Activated B cell treated with CpG ODN at 0.5 μM for 24 hours (primary cell): ENCODE measurements at regions of chr9 and their contacts with region 1.

Region 1: GRCh38 chr9:27460226-27461023 is 63.7 kb upstream of the IFNK start:
- DNase-seq: no peak
- ATAC-seq: peak; percentile 93
- H3K4me3 Mint-ChIP-seq: peak overlapping the region; percentile 66
- H3K27ac Mint-ChIP-seq: peak overlapping the region; percentile 86
- H3K4me1 Mint-ChIP-seq: peaks cover 61% of the 10 kb centered on the region
- H3K27me3 Mint-ChIP-seq: no peaks in the 10 kb centered on the region
- CTCF ChIP-seq: no peak

Region 2: GRCh38 chr9:26892251-26893029 is 568.0 kb before region 1 on chr9 and contains the start of gene CAAP1:
- CTCF ChIA-PET with region 1: no interaction called
- POLR2A ChIA-PET with region 1: no interaction called
- intact Hi-C with region 1: loop called (anchors 10 kb)
- DNase-seq: peak; percentile 87
- ATAC-seq: peak; percentile 96
- H3K4me3 Mint-ChIP-seq: peak within 1 kb of the TSS; percentile 100
- H3K27ac Mint-ChIP-seq: peak within 1 kb of the TSS; percentile 98
- H3K4me1 Mint-ChIP-seq: peaks cover 44% of the 10 kb centered on the region
- H3K27me3 Mint-ChIP-seq: no peaks in the 10 kb centered on the region
- CTCF ChIP-seq: no peak
- total RNA-seq, gene CAAP1: 15.1 and 16.6 TPM in 2 replicates

Region 3: GRCh38 chr9:27365707-27366376 is 94.6 kb before region 1 on chr9:
- CTCF ChIA-PET with region 1: no interaction called
- POLR2A ChIA-PET with region 1: interaction called, 3 read pairs
- intact Hi-C with region 1: loop called (anchors 2 kb)
- DNase-seq: no peak
- ATAC-seq: peak; percentile 73
- H3K4me3 Mint-ChIP-seq: peak overlapping the region; percentile 65
- H3K27ac Mint-ChIP-seq: peak overlapping the region; percentile 63
- H3K4me1 Mint-ChIP-seq: peaks cover 61% of the 10 kb centered on the region
- H3K27me3 Mint-ChIP-seq: no peaks in the 10 kb centered on the region
- CTCF ChIP-seq: no peak

Region 4: DNA sequence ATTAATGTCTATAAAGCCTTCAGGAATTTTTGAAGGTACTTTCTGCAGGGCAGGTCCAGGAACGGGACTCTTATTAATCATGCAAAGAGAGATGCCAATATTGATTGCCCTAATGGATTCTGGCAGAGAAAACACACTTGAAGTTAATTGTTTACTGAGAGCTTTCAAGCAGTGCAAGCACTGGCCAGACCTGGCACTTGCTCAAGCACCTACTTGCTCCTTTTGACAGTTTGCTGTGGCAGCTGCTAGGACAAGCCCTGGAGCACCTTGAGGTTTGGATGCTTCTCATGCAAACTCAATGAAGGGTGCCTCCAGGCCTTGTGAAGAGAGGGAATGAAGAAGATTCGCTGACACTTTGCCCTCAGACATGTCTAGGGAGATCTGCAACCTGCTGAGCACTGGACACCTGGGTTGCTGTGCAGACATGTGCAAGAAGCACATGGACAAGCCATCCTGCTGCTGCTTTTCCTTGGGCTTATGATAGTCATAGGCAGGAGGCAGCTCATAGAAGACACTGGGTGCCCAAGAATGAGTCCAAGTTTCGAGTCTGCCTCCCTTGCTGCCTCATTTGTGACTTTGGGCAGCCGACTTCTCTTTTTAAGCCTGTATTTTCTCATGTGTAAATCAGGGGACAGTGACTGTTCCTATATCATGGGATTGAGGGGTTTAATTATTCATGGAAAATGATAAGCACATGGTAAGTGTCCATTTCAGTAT is 74.7 kb before region 1 on chr9:
- CTCF ChIA-PET with region 1: no interaction called
- POLR2A ChIA-PET with region 1: no interaction called
- intact Hi-C with region 1: loop called (anchors 1 kb)
- DNase-seq: no peak
- ATAC-seq: no peak
- H3K4me3 Mint-ChIP-seq: peak overlapping the region; percentile 19
- H3K27ac Mint-ChIP-seq: no peak overlapping the region
- H3K4me1 Mint-ChIP-seq: peaks cover 86% of the 10 kb centered on the region
- H3K27me3 Mint-ChIP-seq: no peaks in the 10 kb centered on the region
- CTCF ChIP-seq: no peak

Region 5: DNA sequence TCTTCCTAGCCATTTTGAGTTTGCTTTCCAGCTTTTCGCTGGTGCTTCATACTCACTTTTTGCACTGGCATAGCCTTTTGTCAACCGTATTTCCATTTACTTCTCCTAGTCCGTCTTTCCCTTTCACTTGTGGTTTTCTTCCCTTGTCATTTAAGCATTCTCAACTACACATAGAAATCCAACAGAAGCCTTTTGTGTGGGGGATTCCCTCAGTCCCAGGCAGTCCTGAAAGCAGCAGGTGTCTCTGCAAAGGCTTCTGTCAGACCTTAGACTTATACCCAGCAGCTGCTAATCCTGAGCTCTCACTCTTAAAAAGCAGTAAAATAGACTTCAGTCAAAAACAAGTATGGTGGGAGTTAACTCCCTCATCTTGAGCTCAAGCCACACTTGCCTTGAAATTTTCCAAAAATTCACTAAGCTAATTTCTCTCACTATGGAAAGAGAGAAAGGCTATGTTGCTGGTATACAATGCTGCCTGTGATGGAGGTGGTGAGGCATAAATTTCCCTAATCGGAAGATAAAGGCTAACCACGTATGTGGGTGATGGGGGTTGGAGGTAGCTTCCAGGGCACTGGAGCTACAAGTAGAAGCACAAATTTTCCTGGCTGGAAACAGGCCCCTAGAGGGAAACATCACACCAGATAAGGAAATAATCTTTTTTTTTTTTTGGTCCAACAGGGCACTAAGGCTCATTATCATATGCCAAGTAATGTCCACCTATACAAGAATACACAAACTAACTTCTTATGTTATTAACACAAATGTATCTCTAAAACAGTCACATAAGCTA is 28.9 kb after region 1 on chr9:
- CTCF ChIA-PET with region 1: no interaction called
- POLR2A ChIA-PET with region 1: interaction called, 13 read pairs
- intact Hi-C with region 1: loop called (anchors 1 kb)
- DNase-seq: no peak
- ATAC-seq: peak; percentile 40
- H3K4me3 Mint-ChIP-seq: peak overlapping the region; percentile 20
- H3K27ac Mint-ChIP-seq: peak overlapping the region; percentile 46
- H3K4me1 Mint-ChIP-seq: peaks cover 78% of the 10 kb centered on the region
- H3K27me3 Mint-ChIP-seq: no peaks in the 10 kb centered on the region
- CTCF ChIP-seq: no peak

Region 6: GRCh38 chr9:27573634-27574590 is 113.5 kb after region 1 on chr9:
- CTCF ChIA-PET with region 1: no interaction called
- POLR2A ChIA-PET with region 1: no interaction called
- intact Hi-C with region 1: loop called (anchors 5 kb)
- DNase-seq: peak; percentile 77
- ATAC-seq: peak; percentile 88
- H3K4me3 Mint-ChIP-seq: peak overlapping the region; percentile 97
- H3K27ac Mint-ChIP-seq: peak overlapping the region; percentile 99
- H3K4me1 Mint-ChIP-seq: peaks cover 24% of the 10 kb centered on the region
- H3K27me3 Mint-ChIP-seq: no peaks in the 10 kb centered on the region
- CTCF ChIP-seq: no peak

Region 7: GRCh38 chr9:27888661-27889295 is 428.4 kb after region 1 on chr9:
- CTCF ChIA-PET with region 1: no interaction called
- POLR2A ChIA-PET with region 1: no interaction called
- intact Hi-C with region 1: no loop called
- DNase-seq: no peak
- ATAC-seq: peak; percentile 66
- H3K4me3 Mint-ChIP-seq: no peak overlapping the region
- H3K27ac Mint-ChIP-seq: no peak overlapping the region
- H3K4me1 Mint-ChIP-seq: no peaks in the 10 kb centered on the region
- H3K27me3 Mint-ChIP-seq: peaks cover 2% of the 10 kb centered on the region
- CTCF ChIP-seq: no peak